PC-3 (cell line): ENCODE measurements at regions of chr16 and their contacts with region 1.

Region 1: GRCh38 chr16:58336332-58337089 is 41.7 kb upstream of the PRSS54 start:
- DNase-seq: peak; percentile 87
- ATAC-seq: peak; percentile 90
- H3K4me3 ChIP-seq: peak overlapping the region; percentile 61
- H3K27ac ChIP-seq: no peak overlapping the region
- H3K4me1 ChIP-seq: peaks cover 5% of the 10 kb centered on the region
- H3K27me3 ChIP-seq: no peaks in the 10 kb centered on the region
- CTCF ChIP-seq: peak; percentile 85

Region 2: DNA sequence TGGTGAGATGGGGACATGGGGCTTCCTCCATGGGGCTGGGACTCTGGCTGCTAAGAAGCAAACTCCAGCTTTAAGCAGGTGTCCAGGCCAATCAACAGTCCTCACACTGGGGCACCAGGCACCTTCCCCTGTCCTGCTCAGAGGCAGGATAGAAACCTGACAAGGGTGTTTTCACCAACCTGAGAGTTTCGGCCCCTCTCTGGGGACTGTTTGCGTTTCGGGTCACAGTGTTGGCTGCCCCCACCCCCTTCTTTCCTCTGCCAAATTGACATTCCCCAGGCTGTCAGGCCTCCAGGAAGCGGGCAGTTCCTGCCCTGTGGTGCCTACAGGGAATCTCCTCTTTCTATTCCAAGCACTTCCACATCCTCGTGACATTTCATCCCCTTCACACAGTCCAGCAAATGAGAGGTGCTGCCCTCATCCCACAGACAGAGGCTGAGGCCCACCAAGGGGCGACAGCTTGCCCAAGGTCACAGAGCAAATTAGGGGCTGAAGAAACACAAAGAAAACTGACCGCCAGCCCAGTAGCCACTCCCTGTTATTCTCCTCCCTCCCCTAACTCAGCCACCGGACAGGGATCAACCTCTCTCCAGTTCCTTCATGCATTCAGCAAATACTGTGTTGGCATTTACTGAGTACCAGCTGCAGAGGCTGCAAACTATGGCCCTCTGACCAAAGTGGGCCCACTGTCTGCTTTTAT is 273.0 kb before region 1 on chr16:
- CTCF ChIA-PET with region 1: no interaction called
- POLR2A ChIA-PET with region 1: no interaction called
- intact Hi-C with region 1: no loop called
- DNase-seq: no peak
- ATAC-seq: no peak
- H3K4me3 ChIP-seq: no peak overlapping the region
- H3K27ac ChIP-seq: no peak overlapping the region
- H3K4me1 ChIP-seq: no peaks in the 10 kb centered on the region
- H3K27me3 ChIP-seq: no peaks in the 10 kb centered on the region
- CTCF ChIP-seq: no peak

Region 3: DNA sequence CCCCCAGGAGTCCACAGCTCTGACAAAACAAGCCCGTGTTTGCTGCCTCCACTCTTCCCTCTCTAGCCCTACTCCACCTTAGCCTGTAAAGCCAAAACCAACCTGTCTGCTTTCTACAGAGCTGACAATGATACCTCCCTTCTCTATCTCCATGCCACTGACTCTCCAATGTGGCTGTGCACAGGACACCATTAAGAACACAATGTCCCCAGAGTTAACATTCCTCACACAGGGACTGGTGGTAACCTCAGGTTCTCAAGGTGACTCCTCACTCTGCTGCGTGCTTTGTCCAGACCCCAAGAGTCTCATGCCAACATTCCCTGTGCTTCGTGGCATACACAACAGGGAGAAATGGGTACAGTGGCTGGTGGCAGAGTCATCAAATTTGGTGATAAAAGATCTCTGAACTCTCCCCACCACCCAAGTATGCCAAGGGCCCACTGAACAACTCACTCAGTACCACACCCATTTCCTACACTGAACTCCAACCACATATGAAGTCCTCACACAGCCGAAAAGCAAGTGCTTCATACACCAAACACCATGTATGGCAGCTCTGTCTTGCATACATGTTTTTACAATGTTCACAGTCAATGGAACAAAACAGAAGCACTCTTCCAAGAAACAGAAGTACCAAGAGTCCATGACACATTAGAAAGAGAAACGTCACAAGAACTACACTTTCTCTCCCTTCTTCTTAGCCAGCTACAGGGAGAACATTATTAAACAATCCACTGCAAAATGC is 159.7 kb before region 1 on chr16:
- CTCF ChIA-PET with region 1: no interaction called
- POLR2A ChIA-PET with region 1: no interaction called
- intact Hi-C with region 1: no loop called
- DNase-seq: no peak
- ATAC-seq: no peak
- H3K4me3 ChIP-seq: no peak overlapping the region
- H3K27ac ChIP-seq: no peak overlapping the region
- H3K4me1 ChIP-seq: no peaks in the 10 kb centered on the region
- H3K27me3 ChIP-seq: no peaks in the 10 kb centered on the region
- CTCF ChIP-seq: no peak

Region 4: GRCh38 chr16:58487566-58488351 is 151.2 kb after region 1 on chr16:
- CTCF ChIA-PET with region 1: interaction called, 21 read pairs
- POLR2A ChIA-PET with region 1: no interaction called
- intact Hi-C with region 1: loop called (anchors 1 kb)
- DNase-seq: peak; percentile 78
- ATAC-seq: peak; percentile 88
- H3K4me3 ChIP-seq: no peak overlapping the region
- H3K27ac ChIP-seq: no peak overlapping the region
- H3K4me1 ChIP-seq: no peaks in the 10 kb centered on the region
- H3K27me3 ChIP-seq: no peaks in the 10 kb centered on the region
- CTCF ChIP-seq: peak; percentile 79